AG04450 (cell line): ENCODE measurements at regions of chr6 and their contacts with region 1.

Region 1: DNA sequence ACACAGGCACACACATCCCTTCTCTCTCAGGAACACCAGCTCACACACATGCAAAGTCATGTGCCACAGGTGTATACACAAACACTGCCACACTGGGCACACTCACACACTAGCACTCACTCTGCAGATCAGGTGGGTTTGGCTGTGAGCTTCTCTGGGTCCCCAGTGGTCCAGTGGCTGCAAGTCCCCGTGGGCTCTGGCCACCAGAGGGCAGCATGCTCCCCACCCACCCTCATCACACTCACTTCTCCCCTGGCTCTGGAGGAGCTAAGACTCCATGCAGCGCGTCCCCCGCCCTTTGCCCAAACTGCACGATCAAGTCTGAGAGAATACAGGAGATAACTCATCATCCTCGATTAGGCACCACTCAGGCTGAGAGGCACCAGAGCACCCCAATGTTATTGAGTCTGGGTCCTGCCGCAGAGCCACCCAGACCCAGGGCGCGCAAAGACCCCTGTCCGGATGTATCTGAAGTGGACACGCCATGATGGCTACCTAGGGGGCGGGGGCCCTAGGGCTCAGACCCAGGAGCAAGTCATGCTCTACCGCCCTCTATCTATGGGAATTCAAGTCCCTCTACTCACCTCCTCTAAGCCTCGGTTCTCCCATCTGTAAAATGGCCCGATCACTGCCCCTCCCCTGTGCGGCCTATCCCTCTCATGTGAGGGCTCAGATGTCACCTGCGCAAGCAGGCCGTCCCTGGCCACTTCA is 90.5 kb downstream of the GRM4 start:
- DNase-seq: peak; percentile 8
- H3K4me3 ChIP-seq: no peak overlapping the region
- H3K27ac ChIP-seq: no peak overlapping the region
- H3K27me3 ChIP-seq: peaks cover 33% of the 10 kb centered on the region
- CTCF ChIP-seq: peak; percentile 81

Region 2: DNA sequence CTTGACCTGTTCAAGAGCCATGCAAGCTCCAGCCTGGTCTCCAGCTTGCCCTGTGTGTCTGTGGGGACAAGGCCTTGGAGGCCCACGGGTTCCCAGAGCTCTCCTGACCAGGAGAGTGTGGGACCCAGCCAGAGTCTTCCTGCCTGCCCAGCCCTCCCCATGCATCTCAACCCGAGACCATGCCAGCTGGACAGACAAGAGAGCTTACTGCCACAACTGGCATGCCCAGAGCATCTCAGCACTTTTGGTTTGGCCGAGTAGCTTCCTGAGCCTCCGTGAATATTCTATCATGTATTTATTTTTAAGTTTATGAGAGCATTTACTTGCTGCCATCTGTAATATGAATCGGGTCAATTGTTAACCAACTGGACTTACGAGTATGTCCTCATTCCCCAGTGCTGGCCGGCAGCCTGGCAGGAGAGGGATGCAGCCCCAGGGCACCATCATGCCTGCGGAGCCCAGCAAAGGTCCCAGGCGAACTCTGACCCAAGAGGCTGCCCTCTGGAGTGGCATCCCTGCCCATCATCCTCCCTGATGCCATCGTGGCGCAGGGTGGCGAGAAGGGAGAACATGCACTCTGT is 323.5 kb before region 1 on chr6:
- CTCF ChIA-PET with region 1: no interaction called
- POLR2A ChIA-PET with region 1: no interaction called
- DNase-seq: no peak
- H3K4me3 ChIP-seq: no peak overlapping the region
- H3K27ac ChIP-seq: no peak overlapping the region
- H3K27me3 ChIP-seq: peaks cover 7% of the 10 kb centered on the region
- CTCF ChIP-seq: no peak

Region 3: DNA sequence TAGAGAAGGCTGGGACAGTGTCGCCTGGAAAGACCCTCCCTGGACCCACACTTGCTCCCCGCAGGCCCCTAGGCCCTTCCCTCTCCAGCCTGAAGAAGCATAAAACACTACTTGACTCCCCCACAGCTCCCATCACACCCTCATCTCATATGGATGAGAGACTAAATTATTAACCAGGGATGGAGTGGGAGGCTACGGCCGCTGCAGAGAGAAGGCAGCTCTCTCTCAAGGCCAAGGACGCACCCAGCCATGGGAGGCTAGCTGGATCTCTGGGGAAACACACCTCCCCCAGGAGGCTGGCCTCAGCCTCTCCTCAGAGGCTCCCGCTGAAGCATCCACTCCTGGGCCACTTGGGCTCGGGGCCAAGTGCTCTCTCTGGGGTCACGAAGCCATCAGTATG is 12.0 kb before region 1 on chr6:
- CTCF ChIA-PET with region 1: interaction called, 11 read pairs
- POLR2A ChIA-PET with region 1: no interaction called
- DNase-seq: no peak
- H3K4me3 ChIP-seq: no peak overlapping the region
- H3K27ac ChIP-seq: no peak overlapping the region
- H3K27me3 ChIP-seq: peaks cover 14% of the 10 kb centered on the region
- CTCF ChIP-seq: no peak

Region 4: GRCh38 chr6:34154668-34155447 is 99.5 kb after region 1 on chr6:
- CTCF ChIA-PET with region 1: interaction called, 40 read pairs
- POLR2A ChIA-PET with region 1: no interaction called
- DNase-seq: no peak
- H3K4me3 ChIP-seq: peak overlapping the region; percentile 42
- H3K27ac ChIP-seq: no peak overlapping the region
- H3K27me3 ChIP-seq: peaks cover 49% of the 10 kb centered on the region
- CTCF ChIP-seq: peak; percentile 89